ENCODE measurements at regions of chrX and their contacts with region 1.

Region 1: DNA sequence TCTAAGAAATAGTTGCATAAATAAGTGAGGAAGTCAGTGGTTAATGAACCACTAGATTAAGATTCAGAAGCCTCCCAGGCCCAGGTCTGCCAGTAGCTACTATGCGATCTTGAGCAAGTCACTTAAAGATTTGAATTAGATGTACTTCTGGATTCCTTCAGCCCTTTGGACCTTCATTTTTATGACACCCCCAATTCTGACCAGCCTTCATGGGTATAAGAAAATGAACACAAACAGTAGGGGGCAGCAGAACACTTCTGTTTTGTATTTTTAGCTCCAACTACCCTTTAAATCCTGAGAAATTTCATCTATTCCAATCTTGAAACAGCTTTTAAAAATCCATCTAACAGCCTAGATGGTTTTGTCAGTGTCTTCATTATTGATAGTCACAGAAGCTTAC is 19.0 kb downstream of the TMEM47 start:
- DNase-seq: peak; percentile 39
- H3K4me3 ChIP-seq: no peak overlapping the region
- H3K27ac ChIP-seq: no peak overlapping the region
- H3K4me1 ChIP-seq: no peaks in the 10 kb centered on the region
- H3K27me3 ChIP-seq: no peaks in the 10 kb centered on the region
- CTCF ChIP-seq: peak; percentile 11 to 35
- POLR2A ChIP-seq: no peak

Region 2: DNA sequence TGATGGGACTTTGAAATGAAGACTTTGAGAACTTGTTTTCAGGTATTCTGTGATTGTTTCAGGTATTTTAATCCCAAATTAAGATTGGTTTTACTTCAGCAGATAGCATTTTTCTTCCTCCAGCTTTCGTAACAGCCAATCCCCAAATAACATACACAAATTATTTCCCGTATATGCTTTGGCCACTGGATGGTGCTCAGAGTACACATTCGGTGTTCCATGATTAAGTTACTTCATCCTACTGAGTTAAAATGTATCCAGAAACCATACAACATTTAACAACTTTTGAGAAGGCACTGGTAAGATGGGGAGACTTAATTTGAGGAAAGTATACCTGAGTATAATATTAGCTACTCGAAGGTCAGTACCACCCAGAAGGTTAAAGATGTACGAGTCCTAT is 272.6 kb before region 1 on chrX:
- CTCF ChIA-PET with region 1: interaction called, 5 read pairs
- POLR2A ChIA-PET with region 1: no interaction called
- dilution Hi-C with region 1: no loop called
- intact Hi-C with region 1: loop called (anchors 5 kb)
- DNase-seq: peak; percentile 65
- H3K4me3 ChIP-seq: no peak overlapping the region
- H3K27ac ChIP-seq: no peak overlapping the region
- H3K4me1 ChIP-seq: no peaks in the 10 kb centered on the region
- H3K27me3 ChIP-seq: no peaks in the 10 kb centered on the region
- CTCF ChIP-seq: peak; percentile 35
- POLR2A ChIP-seq: no peak

Region 3: GRCh38 chrX:34578237-34578636 is 59.9 kb before region 1 on chrX:
- CTCF ChIA-PET with region 1: interaction called, 15 read pairs
- POLR2A ChIA-PET with region 1: no interaction called
- dilution Hi-C with region 1: no loop called
- intact Hi-C with region 1: loop called (anchors 2 kb)
- DNase-seq: peak; percentile 59
- H3K4me3 ChIP-seq: no peak overlapping the region
- H3K27ac ChIP-seq: no peak overlapping the region
- H3K4me1 ChIP-seq: no peaks in the 10 kb centered on the region
- H3K27me3 ChIP-seq: no peaks in the 10 kb centered on the region
- CTCF ChIP-seq: peak in 1 of 2 donors; percentile 10
- POLR2A ChIP-seq: no peak

Region 4: DNA sequence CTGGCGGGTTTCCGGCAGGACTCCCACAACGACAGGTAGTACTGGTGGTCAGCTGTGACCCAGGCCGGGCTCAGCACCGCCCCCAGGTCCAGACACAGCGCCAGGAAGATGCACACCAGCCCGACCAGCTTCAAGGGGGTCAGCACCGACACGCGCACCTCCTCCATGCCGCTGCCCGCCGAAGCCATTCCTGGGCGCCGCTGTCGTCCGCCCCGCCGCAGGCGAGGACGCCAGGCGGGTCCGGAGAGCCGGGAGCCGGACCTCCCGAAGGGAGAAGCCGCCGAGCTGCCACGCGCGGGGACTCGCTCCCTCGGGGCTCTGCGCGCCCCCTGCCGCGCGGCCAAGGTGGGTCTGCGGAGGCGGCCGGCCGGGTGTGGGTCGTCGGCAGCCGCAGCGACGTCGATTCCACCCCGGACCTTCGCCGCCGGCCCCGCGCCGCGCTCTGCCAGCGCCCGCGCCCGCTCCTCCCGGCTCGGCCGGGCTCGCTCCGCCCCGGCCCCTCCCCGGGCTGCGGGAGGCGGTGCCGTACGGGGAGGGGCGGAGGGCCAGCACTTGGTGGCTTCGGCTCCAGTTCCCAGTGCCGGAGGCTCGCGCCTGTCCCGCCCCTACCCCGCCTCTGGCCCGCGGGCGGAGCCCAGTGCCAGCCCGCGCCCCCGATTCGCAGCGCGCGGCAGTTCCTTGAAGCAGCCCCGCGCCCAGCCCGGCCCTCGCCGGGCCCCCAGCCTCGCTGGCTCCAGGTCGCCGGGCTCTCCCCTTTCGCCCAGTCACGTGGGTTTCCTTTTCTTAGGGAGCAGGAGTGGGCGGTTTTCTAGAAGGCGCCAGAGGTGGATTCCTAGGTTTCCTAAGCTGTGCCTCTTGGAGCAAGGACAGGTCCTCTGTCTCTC is 19.0 kb after region 1 on chrX and contains the start of gene TMEM47:
- CTCF ChIA-PET with region 1: interaction called, 19 read pairs
- POLR2A ChIA-PET with region 1: no interaction called
- dilution Hi-C with region 1: no loop called
- intact Hi-C with region 1: no loop called
- DNase-seq: peak; percentile 83
- H3K4me3 ChIP-seq: peak within 1 kb of the TSS; percentile 59 to 95 (median 91)
- H3K27ac ChIP-seq: peak within 1 kb of the TSS; percentile 74
- H3K4me1 ChIP-seq: peaks cover 13% of the 10 kb centered on the region
- H3K27me3 ChIP-seq: no peaks in the 10 kb centered on the region
- CTCF ChIP-seq: peak in 1 of 2 donors; percentile 5
- POLR2A ChIP-seq: peak; percentile 74
- total RNA-seq, gene TMEM47: 22.2 and 26.8 TPM in 2 replicates

Region 5: DNA sequence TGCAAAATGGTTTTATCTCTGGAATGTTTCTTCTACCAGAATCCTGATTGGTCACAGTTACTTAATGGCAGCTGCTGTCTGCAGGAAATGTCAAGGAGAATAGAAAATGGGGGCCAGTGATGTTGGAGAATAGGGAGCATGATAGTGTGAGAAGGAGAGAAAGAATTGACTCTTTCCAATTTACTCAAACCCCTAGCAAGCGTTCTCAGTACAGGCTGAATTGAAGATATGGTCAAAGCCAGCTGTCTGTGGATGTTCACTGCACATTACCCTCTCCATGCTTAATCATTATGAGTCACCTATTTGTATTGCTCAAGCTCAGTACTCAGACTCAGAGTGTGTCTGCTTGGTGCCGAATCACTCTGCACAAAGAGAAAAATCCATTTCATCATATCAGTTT is 246.7 kb after region 1 on chrX:
- CTCF ChIA-PET with region 1: interaction called, 4 read pairs
- POLR2A ChIA-PET with region 1: no interaction called
- dilution Hi-C with region 1: no loop called
- intact Hi-C with region 1: loop called (anchors 5 kb)
- DNase-seq: peak; percentile 6
- H3K4me3 ChIP-seq: no peak overlapping the region
- H3K27ac ChIP-seq: no peak overlapping the region
- H3K4me1 ChIP-seq: no peaks in the 10 kb centered on the region
- H3K27me3 ChIP-seq: no peaks in the 10 kb centered on the region
- CTCF ChIP-seq: no peak
- POLR2A ChIP-seq: no peak

Region 6: GRCh38 chrX:34918856-34919255 is 280.7 kb after region 1 on chrX:
- CTCF ChIA-PET with region 1: interaction called, 16 read pairs
- POLR2A ChIA-PET with region 1: no interaction called
- dilution Hi-C with region 1: no loop called
- intact Hi-C with region 1: loop called (anchors 10 kb)
- DNase-seq: peak; percentile 67
- H3K4me3 ChIP-seq: no peak overlapping the region
- H3K27ac ChIP-seq: no peak overlapping the region
- H3K4me1 ChIP-seq: no peaks in the 10 kb centered on the region
- H3K27me3 ChIP-seq: no peaks in the 10 kb centered on the region
- CTCF ChIP-seq: peak; percentile 28 to 42
- POLR2A ChIP-seq: no peak

Region 7: DNA sequence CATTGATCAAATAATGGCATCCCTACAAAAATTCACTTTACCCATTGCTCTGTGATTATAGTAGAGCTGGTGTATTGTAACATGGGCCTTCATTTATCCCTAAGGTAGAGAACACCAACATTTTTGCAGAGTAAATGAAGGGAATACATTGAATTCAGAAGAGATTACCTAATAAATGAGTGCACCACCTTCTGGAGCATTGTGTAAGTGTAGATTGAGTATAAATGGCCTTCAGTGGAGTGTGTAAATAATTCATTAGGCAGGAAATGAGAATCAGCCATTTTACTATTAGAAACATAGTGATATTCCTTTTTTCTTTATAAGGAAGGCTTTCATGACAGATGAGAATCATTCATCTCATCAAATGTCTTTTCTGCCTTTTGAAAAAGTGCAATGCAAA is 460.3 kb after region 1 on chrX:
- CTCF ChIA-PET with region 1: interaction called, 10 read pairs
- POLR2A ChIA-PET with region 1: no interaction called
- dilution Hi-C with region 1: no loop called
- intact Hi-C with region 1: no loop called
- DNase-seq: peak; percentile 15
- H3K4me3 ChIP-seq: no peak overlapping the region
- H3K27ac ChIP-seq: no peak overlapping the region
- H3K4me1 ChIP-seq: no peaks in the 10 kb centered on the region
- H3K27me3 ChIP-seq: no peaks in the 10 kb centered on the region
- CTCF ChIP-seq: no peak
- POLR2A ChIP-seq: no peak

Measured in endothelial cell of umbilical vein (primary cell).